Activated CD4-positive, alpha-beta T cell treated with anti-CD3 and anti-CD28 coated beads, Interleukin-2, amount 10 ng/mL, durations not matched to agents 24 days and 14 days (primary cell): ENCODE measurements at regions of chr2 and their contacts with region 1.

Region 1: DNA sequence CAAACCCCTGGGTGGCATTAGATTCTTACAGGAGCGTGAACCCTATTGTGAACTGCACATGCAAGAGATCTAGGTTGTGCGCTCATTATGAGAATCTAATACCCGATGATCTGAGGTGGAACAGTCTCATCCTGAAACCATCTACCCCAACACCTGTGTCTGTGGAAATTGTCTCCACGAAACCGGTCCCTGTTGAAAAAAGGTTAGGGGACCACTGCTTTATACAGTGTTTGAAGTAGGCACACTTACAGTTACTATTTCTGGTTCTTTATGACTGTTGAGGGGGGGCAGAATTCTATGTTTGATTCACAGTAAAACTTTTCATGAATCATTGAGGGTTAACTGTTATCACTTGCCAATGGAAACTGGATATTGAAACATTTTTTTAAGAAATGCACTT is 72.0 kb downstream of the RIF1 start:
- DNase-seq: no peak
- H3K4me3 Mint-ChIP-seq: no peak overlapping the region
- H3K27ac Mint-ChIP-seq: peak overlapping the region; percentile 80
- H3K4me1 Mint-ChIP-seq: peaks cover 17% of the 10 kb centered on the region
- H3K27me3 Mint-ChIP-seq: no peaks in the 10 kb centered on the region

Region 2: GRCh38 chr2:151638191-151638933 is 156.6 kb after region 1 on chr2:
- intact Hi-C with region 1: loop called (anchors 10 kb)
- DNase-seq: peak; percentile 75
- H3K4me3 Mint-ChIP-seq: peak overlapping the region; percentile 79
- H3K27ac Mint-ChIP-seq: peak overlapping the region; percentile 92
- H3K4me1 Mint-ChIP-seq: peaks cover 26% of the 10 kb centered on the region
- H3K27me3 Mint-ChIP-seq: no peaks in the 10 kb centered on the region

Region 3: DNA sequence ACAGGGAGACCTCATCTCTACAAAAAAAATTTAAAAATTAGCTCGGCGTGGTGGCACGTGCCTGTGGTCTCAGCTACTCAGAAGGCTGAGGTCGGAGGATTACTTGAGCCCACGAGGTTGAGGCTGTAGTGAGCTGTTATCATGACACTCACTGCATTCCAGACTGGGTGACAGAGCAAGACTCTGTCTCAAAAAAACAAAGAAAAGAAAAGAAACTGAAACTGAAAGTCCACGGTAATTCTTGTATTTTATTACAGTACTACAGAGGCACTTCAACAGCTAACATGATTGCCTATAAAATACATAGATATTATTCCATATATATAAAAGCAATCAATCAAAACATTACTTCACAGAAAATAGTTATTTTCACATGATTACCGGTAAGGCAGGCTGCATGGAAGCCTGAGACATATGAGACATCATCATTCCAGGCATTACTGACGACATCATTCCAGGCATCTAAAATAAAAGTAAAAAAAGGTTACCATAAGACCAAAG is 1212.5 kb after region 1 on chr2:
- intact Hi-C with region 1: loop called (anchors 10 kb)
- DNase-seq: peak; percentile 81
- H3K4me3 Mint-ChIP-seq: peak overlapping the region; percentile 81
- H3K27ac Mint-ChIP-seq: peak overlapping the region; percentile 93
- H3K4me1 Mint-ChIP-seq: peaks cover 23% of the 10 kb centered on the region
- H3K27me3 Mint-ChIP-seq: no peaks in the 10 kb centered on the region